ENCODE measurements at regions of chr13 and their contacts with region 1.

Region 1: DNA sequence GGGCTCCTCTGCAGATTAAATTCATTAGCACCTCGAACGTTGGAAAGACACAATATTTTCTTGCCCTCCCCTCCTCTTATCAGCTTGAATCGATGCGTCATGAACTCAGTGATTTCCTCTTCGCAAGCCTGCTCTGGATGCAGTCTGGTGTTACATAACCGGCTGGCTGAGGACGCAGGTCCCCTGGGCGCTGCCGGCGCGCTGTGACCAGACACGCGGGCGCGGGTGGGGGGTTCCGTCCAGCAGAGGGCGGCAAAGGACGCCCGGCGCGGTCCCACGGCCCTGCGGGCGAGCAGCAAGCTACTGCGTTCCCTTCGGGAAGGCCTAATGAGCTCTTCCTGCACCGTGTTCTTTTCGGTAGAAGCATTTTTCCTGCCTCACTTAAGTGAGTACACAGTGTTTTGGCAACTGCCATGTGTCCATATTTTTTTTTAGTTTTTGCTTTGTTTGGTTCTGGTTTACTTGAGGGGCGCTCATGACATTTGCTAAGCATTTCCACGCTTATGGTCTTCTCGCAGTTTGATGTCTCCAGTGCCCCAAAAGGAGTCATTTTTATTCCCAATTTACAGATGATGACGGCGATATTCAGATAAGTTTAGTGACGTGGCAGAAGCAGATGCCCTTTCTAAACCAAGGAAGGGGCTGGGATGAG is 112.2 kb upstream of the MBNL2 start:
- DNase-seq: peak; percentile 85 to 94 (median 91)
- H3K4me3 ChIP-seq: no peak overlapping the region
- H3K27ac ChIP-seq: peak overlapping the region in 1 of 2 donors; percentile 27
- H3K4me1 ChIP-seq: peaks cover 18% of the 10 kb centered on the region
- H3K27me3 ChIP-seq: no peaks in the 10 kb centered on the region
- CTCF ChIP-seq: peak; percentile 93 to 98 (median 94)
- EP300 ChIP-seq: peak; percentile 19
- POLR2A ChIP-seq: no peak

Region 2: GRCh38 chr13:96844616-96845015 is 265.4 kb before region 1 on chr13:
- intact Hi-C with region 1: no loop called
- DNase-seq: no peak
- H3K4me3 ChIP-seq: no peak overlapping the region
- H3K27ac ChIP-seq: no peak overlapping the region
- H3K4me1 ChIP-seq: no peaks in the 10 kb centered on the region
- H3K27me3 ChIP-seq: no peaks in the 10 kb centered on the region
- CTCF ChIP-seq: no peak
- EP300 ChIP-seq: no peak
- POLR2A ChIP-seq: no peak

Region 3: GRCh38 chr13:97058391-97058790 is 51.6 kb before region 1 on chr13:
- intact Hi-C with region 1: no loop called
- DNase-seq: no peak
- H3K4me3 ChIP-seq: no peak overlapping the region
- H3K27ac ChIP-seq: no peak overlapping the region
- H3K4me1 ChIP-seq: no peaks in the 10 kb centered on the region
- H3K27me3 ChIP-seq: no peaks in the 10 kb centered on the region
- CTCF ChIP-seq: no peak
- EP300 ChIP-seq: no peak
- POLR2A ChIP-seq: no peak

Region 4: GRCh38 chr13:97091196-97091595 is 18.8 kb before region 1 on chr13:
- intact Hi-C with region 1: no loop called
- DNase-seq: no peak
- H3K4me3 ChIP-seq: no peak overlapping the region
- H3K27ac ChIP-seq: no peak overlapping the region
- H3K4me1 ChIP-seq: no peaks in the 10 kb centered on the region
- H3K27me3 ChIP-seq: no peaks in the 10 kb centered on the region
- CTCF ChIP-seq: no peak
- EP300 ChIP-seq: no peak
- POLR2A ChIP-seq: no peak

Region 5: DNA sequence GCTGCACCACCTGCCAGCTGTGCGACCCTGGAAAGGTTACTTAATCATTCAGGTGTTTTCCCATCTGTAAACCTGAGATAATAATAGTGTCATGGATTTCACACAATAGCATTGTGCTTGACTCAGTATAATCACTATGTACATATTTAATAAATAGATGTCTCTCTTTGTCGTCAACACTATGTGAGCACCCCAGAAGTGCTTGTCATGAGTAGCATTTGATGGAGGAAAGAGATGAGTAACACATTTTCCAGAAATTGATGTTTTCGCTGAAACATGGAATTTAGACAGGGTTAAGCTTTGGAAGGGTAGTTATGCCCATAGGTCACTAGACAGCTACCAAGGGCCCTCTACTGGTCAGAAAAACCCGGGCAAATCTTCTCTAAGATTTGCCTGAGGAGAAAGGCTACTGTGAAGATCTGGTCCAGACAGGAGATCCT is 102.7 kb after region 1 on chr13:
- intact Hi-C with region 1: loop called in 2 of 4 experiments (anchors 10 kb)
- DNase-seq: no peak
- H3K4me3 ChIP-seq: no peak overlapping the region
- H3K27ac ChIP-seq: no peak overlapping the region
- H3K4me1 ChIP-seq: peaks cover 5% of the 10 kb centered on the region
- H3K27me3 ChIP-seq: no peaks in the 10 kb centered on the region
- CTCF ChIP-seq: no peak
- EP300 ChIP-seq: no peak
- POLR2A ChIP-seq: no peak

Region 6: DNA sequence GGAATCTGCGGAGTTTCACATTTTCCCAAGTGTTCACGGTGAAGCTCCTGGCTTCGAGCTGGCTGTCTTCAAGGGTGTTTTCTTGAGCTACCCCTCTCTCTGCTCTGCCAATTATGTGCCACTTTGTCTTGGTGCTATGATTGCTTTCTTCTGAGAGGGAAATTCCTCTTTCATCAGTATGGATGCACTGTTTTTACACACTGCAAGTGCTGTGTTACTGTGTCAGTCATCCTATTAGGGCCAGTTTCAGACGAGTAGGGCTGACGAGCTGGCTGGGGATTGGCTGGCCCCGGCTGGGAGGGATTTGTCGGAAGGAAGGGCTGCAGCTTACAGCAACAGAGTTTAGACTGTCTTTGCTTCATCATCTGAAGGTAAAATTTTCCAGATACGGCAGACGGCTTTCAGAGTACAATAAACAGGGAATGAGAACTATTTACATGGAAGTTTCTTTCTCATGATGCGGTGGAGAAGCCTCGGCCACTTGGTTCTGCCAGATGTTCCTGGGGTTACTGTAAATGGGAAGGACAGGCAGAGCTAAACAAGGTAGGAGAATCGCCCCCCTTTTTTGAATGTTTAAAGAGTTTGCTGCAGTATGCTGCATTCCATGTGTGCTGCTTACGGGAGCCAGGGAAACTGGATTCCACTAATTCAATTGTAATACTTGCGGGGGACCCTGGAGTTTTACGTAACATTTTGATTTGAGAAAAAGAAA is 112.2 kb after region 1 on chr13 and contains the start of gene MBNL2:
- intact Hi-C with region 1: loop called (anchors 5 to 10 kb)
- DNase-seq: peak; percentile 83 to 89 (median 85)
- H3K4me3 ChIP-seq: peak within 1 kb of the TSS; percentile 60
- H3K27ac ChIP-seq: peak within 1 kb of the TSS; percentile 54 to 85
- H3K4me1 ChIP-seq: peaks cover 7% of the 10 kb centered on the region
- H3K27me3 ChIP-seq: no peaks in the 10 kb centered on the region
- CTCF ChIP-seq: no peak
- EP300 ChIP-seq: peak; percentile 40
- POLR2A ChIP-seq: peak; percentile 77
- total RNA-seq, gene MBNL2: 65.5 to 110 (median 97.8) TPM

Region 7: DNA sequence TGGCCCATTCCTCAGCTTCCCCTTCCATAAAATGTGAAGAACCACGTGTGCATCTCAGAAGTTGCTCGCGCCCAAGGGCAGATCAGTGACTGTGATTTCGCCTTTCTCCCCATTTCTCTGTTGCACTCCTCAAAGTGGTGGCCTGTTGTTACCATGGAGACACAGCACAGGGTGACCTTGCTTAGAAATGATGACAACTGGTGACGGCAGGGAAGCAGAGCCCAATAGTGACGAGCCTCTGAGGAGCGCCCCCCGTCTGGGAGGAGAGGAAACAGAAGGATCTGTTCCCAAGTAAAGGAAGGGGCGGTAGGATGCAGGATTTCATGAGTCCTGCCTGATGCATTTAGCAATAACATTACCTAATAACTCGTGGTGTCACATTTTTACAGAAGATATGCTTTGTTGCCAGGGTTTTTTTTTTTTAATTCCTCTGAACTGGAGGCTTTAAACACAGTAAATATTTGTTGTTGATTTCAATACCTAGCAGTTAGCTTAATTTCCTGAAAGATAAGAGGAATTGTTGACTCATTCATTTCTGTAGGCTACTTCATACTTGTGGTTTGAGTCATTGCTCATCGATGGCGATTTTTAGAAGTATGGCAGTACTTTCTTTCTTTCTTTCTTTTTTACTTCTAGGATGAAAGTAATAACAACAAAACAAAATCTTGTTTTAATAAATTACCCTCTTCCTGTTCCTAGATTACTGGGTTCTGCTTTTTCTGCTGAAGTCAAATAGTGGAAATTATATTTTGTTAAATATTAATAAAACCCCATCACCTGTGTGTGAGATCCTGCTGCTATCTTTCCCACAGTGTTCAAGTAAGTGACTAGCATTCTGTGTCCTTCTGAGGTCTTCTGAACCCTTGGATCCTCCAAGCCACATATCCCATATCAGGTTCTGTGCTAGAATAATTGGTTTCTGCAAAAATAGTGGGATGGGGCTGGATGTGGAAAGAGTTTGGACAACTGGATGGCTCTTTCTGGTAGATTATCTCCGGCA is 148.1 kb after region 1 on chr13:
- intact Hi-C with region 1: loop called in 1 of 4 experiments (anchors 10 kb)
- DNase-seq: peak in 3 of 5 donors; percentile 48 to 75 (median 57)
- H3K4me3 ChIP-seq: no peak overlapping the region
- H3K27ac ChIP-seq: peak overlapping the region in 1 of 2 donors; percentile 36
- H3K4me1 ChIP-seq: peaks cover 50% of the 10 kb centered on the region
- H3K27me3 ChIP-seq: no peaks in the 10 kb centered on the region
- CTCF ChIP-seq: no peak
- EP300 ChIP-seq: peak; percentile 83
- POLR2A ChIP-seq: no peak

Region 8: DNA sequence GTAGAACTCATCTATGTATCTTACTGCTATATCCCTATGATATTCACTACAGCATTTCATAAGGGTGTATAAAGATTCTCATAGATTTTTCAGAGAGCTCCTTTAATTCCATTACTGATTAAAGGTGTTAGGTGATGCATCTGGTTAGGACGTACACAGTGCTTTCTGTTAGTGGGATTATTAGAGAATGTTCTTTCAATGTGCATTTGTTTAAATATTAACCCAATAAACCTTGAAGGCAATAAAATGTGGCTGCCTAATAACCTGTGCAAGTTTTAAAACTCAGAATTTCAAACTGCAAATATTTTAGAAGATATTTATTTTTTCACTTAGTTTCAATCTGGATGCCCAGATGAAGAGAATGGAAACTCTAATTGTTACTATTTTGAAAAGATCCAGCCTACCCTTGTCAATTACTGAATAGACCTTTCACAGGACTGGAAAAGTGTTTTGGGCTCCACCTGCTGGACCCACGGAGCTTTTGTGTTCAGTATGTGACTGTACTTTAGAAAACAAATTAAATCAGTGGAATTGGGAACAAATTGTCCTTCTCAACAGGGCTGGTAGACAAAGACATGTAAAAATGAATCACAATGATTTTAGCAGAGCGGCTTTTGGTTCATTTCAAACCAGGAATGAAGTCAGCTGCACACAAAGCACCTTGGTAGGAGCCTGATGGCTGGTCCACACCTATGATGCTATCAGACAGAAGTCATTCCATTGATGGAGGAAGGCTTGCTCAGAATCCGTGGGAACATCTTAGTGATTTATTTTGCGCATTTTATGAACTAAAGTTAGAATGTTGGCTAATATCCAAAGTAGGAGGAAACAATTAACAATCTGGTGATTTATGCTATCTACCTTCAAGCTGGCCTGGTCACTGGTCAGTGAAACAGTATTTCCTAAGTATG is 234.6 kb after region 1 on chr13:
- intact Hi-C with region 1: loop called in 3 of 4 experiments (anchors 5 kb)
- DNase-seq: peak; percentile 35 to 74 (median 62)
- H3K4me3 ChIP-seq: no peak overlapping the region
- H3K27ac ChIP-seq: no peak overlapping the region
- H3K4me1 ChIP-seq: peaks cover 4% of the 10 kb centered on the region
- H3K27me3 ChIP-seq: no peaks in the 10 kb centered on the region
- CTCF ChIP-seq: peak in 2 of 3 donors; percentile 55 to 58
- EP300 ChIP-seq: no peak
- POLR2A ChIP-seq: no peak

Region 9: DNA sequence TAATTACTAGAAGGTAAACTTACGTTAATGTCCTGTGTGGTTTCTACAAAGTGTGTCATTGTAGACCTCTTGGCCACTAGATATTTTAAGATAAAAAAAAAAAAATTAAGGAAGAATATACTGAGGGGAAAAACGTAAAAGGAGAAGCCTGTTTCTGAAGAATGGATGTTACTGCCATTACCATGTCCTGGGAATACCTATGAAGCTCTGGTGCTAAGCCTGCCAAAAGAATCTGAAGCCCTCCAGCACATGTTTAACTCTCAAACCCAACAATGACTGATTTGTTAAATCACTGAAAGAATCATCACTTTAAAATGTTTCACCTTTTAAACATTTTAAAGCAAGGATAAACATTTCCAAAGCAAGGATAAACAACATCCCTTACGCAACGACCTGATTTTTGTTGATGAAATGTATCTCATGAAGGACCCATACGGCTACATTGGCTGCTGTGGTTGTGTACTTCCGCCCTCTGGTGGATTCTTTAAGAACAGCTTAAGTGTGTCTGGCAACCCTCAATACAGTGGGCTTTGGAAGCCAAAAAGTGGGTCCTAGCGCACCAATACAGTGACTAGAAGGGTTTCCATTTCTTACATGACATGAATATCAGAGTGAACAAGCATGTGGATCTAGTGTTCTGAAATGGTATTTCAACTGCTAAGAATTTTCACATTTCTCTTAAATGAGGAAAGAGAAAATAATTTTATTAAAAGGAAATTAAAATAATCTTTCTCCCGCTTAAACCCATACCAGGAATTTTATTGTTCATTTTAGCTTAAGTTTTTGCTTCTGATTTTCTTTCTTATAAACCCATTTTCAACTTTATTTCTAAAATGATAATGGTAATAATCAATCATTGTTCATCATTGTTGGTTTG is 249.5 kb after region 1 on chr13:
- intact Hi-C with region 1: loop called in 2 of 4 experiments (anchors 5 kb)
- DNase-seq: peak in 4 of 5 donors; percentile 20 to 67 (median 35)
- H3K4me3 ChIP-seq: no peak overlapping the region
- H3K27ac ChIP-seq: no peak overlapping the region
- H3K4me1 ChIP-seq: peaks cover 2% of the 10 kb centered on the region
- H3K27me3 ChIP-seq: no peaks in the 10 kb centered on the region
- CTCF ChIP-seq: peak; percentile 43 to 85 (median 82)
- EP300 ChIP-seq: no peak
- POLR2A ChIP-seq: no peak

Region 10: DNA sequence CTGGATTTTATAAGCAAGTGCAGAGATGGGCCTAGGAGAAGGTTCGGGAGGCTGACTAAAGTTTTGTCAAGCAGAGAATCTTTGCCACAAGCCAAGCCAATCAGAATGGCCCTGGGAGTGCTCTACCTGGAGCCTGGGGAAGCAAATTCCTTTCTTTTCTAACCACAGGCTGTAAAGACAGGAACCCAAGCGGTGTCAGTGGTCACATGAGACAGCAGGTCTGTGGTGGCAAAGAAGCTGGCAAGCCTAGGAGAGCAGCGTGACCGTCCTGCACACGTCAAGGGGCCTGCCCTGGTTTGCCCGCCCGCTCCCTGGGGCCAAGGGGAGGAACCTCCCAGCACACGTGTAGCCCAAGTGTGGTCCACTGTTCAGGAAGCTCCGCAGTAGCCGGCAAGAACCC is 934.3 kb after region 1 on chr13:
- intact Hi-C with region 1: no loop called
- DNase-seq: no peak
- H3K4me3 ChIP-seq: no peak overlapping the region
- H3K27ac ChIP-seq: no peak overlapping the region
- H3K4me1 ChIP-seq: no peaks in the 10 kb centered on the region
- H3K27me3 ChIP-seq: no peaks in the 10 kb centered on the region
- CTCF ChIP-seq: no peak
- EP300 ChIP-seq: no peak
- POLR2A ChIP-seq: no peak